Posterior cingulate gyrus (tissue), 11 donors: ENCODE measurements at regions of chr5 and their contacts with region 1.

Region 1: GRCh38 chr5:77143998-77144836 is 57.1 kb upstream of the ZBED3 start:
- DNase-seq: peak; percentile 63 to 97 (median 81)

Region 2: GRCh38 chr5:77239126-77239741 is 95.0 kb after region 1 on chr5:
- intact Hi-C with region 1: loop called (anchors 10 kb)
- DNase-seq: peak in 1 of 10 donors; percentile 32

Region 3: DNA sequence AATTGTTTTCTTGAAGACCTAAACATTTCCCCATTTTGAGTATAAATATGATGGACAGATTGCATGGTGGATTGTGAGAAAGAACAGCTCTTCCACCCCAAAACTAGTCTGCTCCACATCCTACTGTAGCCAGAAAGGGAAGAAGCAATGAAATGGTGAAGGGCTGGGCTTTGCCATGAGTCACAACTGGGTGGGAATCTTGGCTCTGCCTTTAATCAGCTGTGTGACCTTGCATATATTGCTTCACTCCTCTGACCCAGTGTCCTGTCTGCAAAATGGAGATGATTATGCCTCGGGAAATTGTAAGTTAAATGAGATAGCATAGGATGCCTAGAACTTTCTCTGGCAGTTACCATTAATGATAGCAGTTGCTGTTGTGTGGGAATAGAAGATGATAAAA is 168.2 kb after region 1 on chr5:
- intact Hi-C with region 1: no loop called
- DNase-seq: no peak

Region 4: DNA sequence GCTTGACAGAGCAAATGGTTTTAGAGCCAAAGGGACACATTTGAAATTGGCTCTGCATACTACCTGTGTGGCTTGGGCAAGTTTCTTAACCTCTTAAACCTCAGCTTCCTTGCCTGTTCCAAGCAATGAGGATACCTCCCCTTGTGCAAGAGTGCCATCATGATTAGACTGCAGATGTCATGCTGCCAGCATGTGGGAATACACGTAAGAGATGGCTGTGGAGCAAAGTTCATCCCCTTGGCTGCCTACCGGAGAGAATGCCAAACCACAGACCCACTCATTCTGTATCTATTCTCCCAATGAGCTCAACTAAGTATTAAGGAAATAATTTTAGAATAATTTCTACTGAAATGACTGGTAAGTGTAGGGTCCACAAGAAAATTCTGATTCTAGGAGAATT is 246.6 kb after region 1 on chr5:
- intact Hi-C with region 1: no loop called
- DNase-seq: no peak

Region 5: GRCh38 chr5:77437194-77437593 is 293.0 kb after region 1 on chr5:
- intact Hi-C with region 1: loop called (anchors 5 kb)
- DNase-seq: no peak

Region 6: GRCh38 chr5:77491783-77492652 is 347.8 kb after region 1 on chr5 and contains the start of gene WDR41:
- intact Hi-C with region 1: loop called (anchors 5 kb)
- DNase-seq: peak; percentile 78 to 98 (median 84)